H1 (cell line): ENCODE measurements at regions of chr18 and their contacts with region 1.

Region 1: DNA sequence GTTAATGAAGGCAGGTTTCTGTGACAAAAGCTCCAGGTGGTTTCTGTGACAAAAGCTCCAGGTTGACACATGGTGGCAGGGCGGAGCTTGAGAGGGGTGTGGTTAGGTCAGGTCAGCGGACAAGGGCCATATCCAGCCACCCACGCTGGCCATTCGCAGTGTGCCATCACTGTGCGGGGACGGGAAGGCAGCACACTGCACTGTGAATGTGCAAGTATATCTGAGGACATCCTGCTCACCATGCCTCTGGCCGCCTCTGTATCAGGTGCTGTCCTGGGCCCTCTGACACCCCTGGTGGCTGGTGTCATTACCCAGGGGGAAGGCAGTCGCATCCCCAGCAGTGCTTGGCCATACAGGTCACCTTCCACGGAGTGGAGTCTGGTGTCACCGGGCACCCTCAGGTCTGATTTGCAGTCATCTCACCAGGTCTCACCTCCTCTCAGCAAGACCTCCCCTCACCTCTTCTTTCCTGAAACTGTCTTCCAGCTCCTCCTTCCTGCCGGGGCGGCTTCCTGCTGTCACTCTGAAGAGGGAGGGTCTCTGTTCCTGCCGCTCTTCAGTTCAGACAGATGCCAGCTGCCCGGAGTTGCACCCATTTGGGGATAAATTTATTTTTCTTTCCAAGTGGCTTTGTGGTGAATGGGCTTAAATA is 34.9 kb downstream of the CTIF start:
- DNase-seq: peak in 1 of 2 experiments; percentile 62
- H3K4me3 ChIP-seq: no peak overlapping the region
- H3K27ac ChIP-seq: no peak overlapping the region
- H3K4me1 ChIP-seq: peaks cover 0 to 5% (median 2%) of the 10 kb centered on the region in 4 experiments; a peak in 4 of 7 replicates
- H3K27me3 ChIP-seq: no peaks in the 10 kb centered on the region
- CTCF ChIP-seq: peak; percentile 23 to 54 (median 47); a peak in 3 of 4 replicates
- EP300 ChIP-seq: no peak
- POLR2A ChIP-seq: no peak
- RAD21 ChIP-seq: peak; percentile 5 to 30; a peak in 3 of 4 replicates

Region 2: GRCh38 chr18:48519431-48520100 is 54.2 kb before region 1 on chr18:
- CTCF ChIA-PET with region 1: no interaction called
- POLR2A ChIA-PET with region 1: no interaction called
- DNase-seq: no peak
- H3K4me3 ChIP-seq: no peak overlapping the region
- H3K27ac ChIP-seq: no peak overlapping the region
- H3K4me1 ChIP-seq: no peaks in the 10 kb centered on the region; a peak in 1 of 7 replicates
- H3K27me3 ChIP-seq: no peaks in the 10 kb centered on the region
- CTCF ChIP-seq: no peak
- EP300 ChIP-seq: no peak
- POLR2A ChIP-seq: no peak
- RAD21 ChIP-seq: no peak

Region 3: DNA sequence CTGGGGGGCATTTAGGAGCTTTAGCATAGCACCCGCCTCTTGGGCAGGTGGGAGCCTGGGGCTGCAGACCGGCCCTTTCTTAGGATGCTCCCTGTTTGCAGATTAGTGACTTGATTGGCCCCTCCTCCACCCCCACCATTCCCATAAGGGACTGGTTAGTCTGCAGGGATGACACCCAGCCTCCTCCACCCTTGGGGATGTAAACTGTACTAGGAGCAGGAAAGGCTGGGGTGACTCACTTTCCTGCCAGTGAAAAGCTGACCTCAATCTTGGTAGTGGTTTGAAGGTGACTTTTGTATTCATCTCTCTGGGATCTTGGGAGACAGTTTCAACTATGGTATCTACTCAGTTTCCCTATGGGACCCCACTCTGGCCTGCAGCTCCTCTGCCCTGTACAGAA is 10.7 kb before region 1 on chr18:
- CTCF ChIA-PET with region 1: interaction called, 11 read pairs
- POLR2A ChIA-PET with region 1: no interaction called
- DNase-seq: no peak
- H3K4me3 ChIP-seq: no peak overlapping the region
- H3K27ac ChIP-seq: no peak overlapping the region
- H3K4me1 ChIP-seq: peaks cover 0 to 2% (median 0%) of the 10 kb centered on the region in 4 experiments; a peak in 4 of 7 replicates
- H3K27me3 ChIP-seq: no peaks in the 10 kb centered on the region
- CTCF ChIP-seq: no peak
- EP300 ChIP-seq: no peak
- POLR2A ChIP-seq: no peak
- RAD21 ChIP-seq: no peak

Region 4: DNA sequence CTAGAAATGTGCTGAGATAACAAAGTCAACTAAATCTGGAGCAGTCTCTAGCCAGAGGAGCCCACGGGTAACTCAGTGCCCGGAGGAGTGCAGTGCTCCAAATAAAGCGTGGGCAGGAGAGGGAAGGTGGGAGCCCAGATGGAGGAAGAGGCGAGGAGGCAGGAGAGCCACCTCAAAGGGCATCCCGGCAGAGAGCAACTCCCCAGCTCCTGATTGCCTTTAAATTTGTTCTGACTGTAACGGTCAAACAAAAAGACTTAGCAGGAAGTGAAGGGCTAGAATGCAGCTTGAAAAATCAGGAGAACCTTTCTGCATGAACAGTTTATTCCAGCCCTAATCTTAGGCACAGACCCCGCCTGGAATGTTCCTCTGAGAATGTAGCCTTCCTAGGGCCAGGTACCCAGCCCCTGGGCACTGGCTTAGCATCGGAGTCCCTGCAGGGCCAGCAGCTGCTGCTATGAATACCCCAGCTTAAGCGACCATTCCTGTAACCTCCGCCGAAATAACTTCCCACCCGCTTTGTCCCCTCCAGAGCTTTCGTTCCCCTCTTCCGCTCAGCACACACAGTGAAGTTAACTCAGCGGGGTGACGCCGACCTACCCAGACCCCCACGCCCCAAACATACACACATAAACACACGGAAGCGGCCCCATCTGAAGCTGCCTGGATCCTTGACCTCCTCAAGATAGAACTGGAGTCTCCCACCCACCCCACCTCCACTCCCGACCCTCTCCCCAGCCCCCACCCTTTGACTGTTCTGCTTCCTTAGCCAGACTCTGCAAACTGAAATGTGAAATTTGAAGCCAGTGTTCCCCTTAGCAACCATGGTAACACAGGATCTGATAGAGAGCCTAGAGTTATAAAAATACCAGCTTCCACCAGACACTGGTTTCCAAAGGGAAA is 253.8 kb after region 1 on chr18:
- CTCF ChIA-PET with region 1: no interaction called
- POLR2A ChIA-PET with region 1: no interaction called
- DNase-seq: peak in 1 of 2 experiments; percentile 62
- H3K4me3 ChIP-seq: peak overlapping the region in 2 of 4 experiments; percentile 18 to 46; a peak in 3 of 8 replicates
- H3K27ac ChIP-seq: no peak overlapping the region
- H3K4me1 ChIP-seq: peaks cover 11 to 30% (median 21%) of the 10 kb centered on the region in 4 experiments
- H3K27me3 ChIP-seq: no peaks in the 10 kb centered on the region
- CTCF ChIP-seq: no peak
- EP300 ChIP-seq: no peak
- POLR2A ChIP-seq: no peak
- RAD21 ChIP-seq: peak in 1 of 2 experiments; percentile 5; a peak in 1 of 4 replicates